Activated CD4-positive, alpha-beta T cell treated with anti-CD3 and anti-CD28 coated beads for 36 hours (primary cell): ENCODE measurements at regions of chr9 and their contacts with region 1.

Region 1: GRCh38 chr9:113410207-113410864 is at the starts of genes C9orf43 and POLE3:
- DNase-seq: peak; percentile 98
- ATAC-seq: peak; percentile 93
- H3K4me3 Mint-ChIP-seq: peak within 1 kb of the TSS; percentile 98
- H3K27ac Mint-ChIP-seq: peak within 1 kb of the TSS; percentile 100
- H3K4me1 Mint-ChIP-seq: peaks cover 36% of the 10 kb centered on the region
- H3K27me3 Mint-ChIP-seq: no peaks in the 10 kb centered on the region
- total RNA-seq, gene C9orf43: 0.91 to 1.1 TPM
- total RNA-seq, gene POLE3: 53.3 to 57.4 TPM

Region 2: GRCh38 chr9:112717661-112718341 is 692.5 kb before region 1 on chr9 and contains the start of gene INIP:
- CTCF ChIA-PET with region 1: no interaction called
- POLR2A ChIA-PET with region 1: no interaction called
- intact Hi-C with region 1: loop called in 1 of 2 experiments (anchors 1 kb)
- DNase-seq: peak; percentile 99
- ATAC-seq: peak; percentile 93
- H3K4me3 Mint-ChIP-seq: peak within 1 kb of the TSS; percentile 89
- H3K27ac Mint-ChIP-seq: peak within 1 kb of the TSS; percentile 97
- H3K4me1 Mint-ChIP-seq: peaks cover 35% of the 10 kb centered on the region
- H3K27me3 Mint-ChIP-seq: no peaks in the 10 kb centered on the region
- total RNA-seq, gene INIP: 37.3 to 37.7 TPM

Region 3: DNA sequence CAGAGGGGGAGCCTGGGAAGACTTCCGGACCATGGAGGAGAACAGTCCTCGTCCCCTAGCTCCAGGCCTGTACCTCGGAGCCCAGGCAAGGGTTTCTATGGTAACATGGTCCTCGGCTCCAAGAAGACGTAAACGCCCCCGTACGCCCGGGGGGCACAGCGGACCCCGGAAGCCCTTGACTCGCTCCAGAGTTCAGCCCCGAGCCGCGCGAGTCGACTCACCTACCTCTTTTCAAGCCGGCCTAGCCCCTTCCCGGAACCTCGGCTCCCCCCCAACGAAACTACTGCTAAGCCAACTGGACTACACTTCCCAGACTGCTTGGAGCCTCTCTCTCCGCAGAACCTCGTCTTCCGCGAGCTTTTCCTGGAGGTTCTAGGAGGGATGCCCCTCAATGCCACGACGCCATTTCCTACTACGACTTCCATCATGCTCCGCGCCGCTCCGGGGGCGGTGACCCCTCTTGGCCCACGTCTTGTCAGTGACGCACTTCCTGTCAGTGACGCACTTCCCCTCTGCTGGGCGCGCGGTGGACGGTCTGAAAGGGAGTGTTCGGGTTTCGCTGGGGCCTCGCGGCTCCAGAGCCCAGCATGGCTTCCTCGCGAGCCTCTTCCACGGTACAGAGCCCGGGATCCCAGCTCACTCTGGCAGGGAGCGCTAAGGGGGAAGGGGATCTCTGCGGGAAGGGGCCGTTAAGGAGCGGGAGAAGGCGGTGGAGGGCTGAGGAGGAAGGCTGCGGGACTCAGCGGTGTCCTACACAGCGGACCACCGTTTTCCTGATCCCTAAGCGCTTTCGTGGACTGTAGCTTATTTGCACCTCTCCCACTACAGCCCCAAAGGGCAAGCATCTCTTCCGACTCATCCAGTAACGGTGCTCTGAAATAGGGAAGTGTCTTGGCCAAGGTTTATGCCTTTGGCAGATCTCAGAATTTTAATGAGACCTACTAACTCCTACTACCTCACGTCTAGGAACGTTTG is 134.9 kb before region 1 on chr9 and contains the starts of genes CDC26 and PRPF4:
- CTCF ChIA-PET with region 1: interaction called, 21 read pairs
- POLR2A ChIA-PET with region 1: interaction called, 13 read pairs
- intact Hi-C with region 1: loop called (anchors 1 kb)
- DNase-seq: peak; percentile 98
- ATAC-seq: peak; percentile 91
- H3K4me3 Mint-ChIP-seq: no peak within 1 kb of the TSS
- H3K27ac Mint-ChIP-seq: no peak within 1 kb of the TSS
- H3K4me1 Mint-ChIP-seq: peaks cover 35% of the 10 kb centered on the region
- H3K27me3 Mint-ChIP-seq: no peaks in the 10 kb centered on the region
- total RNA-seq, gene CDC26: 27.5 to 44.2 TPM
- total RNA-seq, gene PRPF4: 51.5 to 53.1 TPM

Region 4: GRCh38 chr9:113349445-113350094 is 60.8 kb before region 1 on chr9 and contains the start of gene BSPRY:
- CTCF ChIA-PET with region 1: interaction called, 8 read pairs
- POLR2A ChIA-PET with region 1: interaction called, 3 read pairs
- intact Hi-C with region 1: loop called in 1 of 2 experiments (anchors 2 kb)
- DNase-seq: peak; percentile 48
- ATAC-seq: peak; percentile 42
- H3K4me3 Mint-ChIP-seq: peak within 1 kb of the TSS; percentile 75
- H3K27ac Mint-ChIP-seq: peak within 1 kb of the TSS; percentile 71
- H3K4me1 Mint-ChIP-seq: peaks cover 48% of the 10 kb centered on the region
- H3K27me3 Mint-ChIP-seq: peaks cover 37% of the 10 kb centered on the region
- total RNA-seq, gene BSPRY: 5.7 to 6.6 TPM

Region 5: DNA sequence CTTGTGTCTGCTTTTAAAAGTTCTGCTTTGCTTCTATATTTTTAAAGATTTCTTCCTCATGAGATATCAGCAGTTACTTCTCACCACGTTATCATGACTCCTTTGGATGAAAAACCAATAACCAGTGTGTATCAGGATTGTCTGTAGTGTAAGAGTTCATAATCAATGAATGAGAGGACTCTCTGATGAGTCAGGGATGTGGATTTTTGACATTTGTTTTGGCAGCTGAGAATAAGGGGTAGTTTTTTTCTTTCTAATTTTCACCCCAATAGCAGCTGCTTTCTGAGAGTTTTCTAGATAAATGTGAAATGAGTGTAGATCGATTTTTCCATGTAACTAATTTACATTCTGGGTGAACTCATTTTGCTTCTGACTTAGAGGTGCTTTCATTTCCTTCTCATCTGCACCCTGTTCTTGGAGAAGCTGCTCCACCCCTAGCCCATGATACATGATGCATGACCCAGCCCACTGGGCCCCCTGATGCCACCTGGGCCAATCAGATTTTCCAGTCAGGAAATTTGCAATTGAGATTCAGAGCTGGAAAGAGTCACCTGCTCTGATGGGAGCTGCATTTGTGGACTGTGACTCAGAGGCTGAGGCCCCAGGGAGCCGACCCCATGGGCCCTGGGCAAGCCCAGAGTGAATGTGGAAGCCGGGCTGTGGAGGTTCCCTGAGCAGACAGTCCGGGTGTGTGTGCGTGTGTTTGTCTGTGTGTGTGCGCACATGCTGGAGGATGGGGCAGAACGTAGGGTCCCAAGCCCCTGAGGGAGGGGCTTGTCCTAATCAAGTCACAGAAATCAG is 212.5 kb after region 1 on chr9:
- CTCF ChIA-PET with region 1: no interaction called
- POLR2A ChIA-PET with region 1: interaction called, 7 read pairs
- intact Hi-C with region 1: loop called in 1 of 2 experiments (anchors 1 kb)
- DNase-seq: peak; percentile 90
- ATAC-seq: peak; percentile 92
- H3K4me3 Mint-ChIP-seq: peak overlapping the region; percentile 58
- H3K27ac Mint-ChIP-seq: peak overlapping the region; percentile 98
- H3K4me1 Mint-ChIP-seq: peaks cover 57% of the 10 kb centered on the region
- H3K27me3 Mint-ChIP-seq: no peaks in the 10 kb centered on the region

Region 6: DNA sequence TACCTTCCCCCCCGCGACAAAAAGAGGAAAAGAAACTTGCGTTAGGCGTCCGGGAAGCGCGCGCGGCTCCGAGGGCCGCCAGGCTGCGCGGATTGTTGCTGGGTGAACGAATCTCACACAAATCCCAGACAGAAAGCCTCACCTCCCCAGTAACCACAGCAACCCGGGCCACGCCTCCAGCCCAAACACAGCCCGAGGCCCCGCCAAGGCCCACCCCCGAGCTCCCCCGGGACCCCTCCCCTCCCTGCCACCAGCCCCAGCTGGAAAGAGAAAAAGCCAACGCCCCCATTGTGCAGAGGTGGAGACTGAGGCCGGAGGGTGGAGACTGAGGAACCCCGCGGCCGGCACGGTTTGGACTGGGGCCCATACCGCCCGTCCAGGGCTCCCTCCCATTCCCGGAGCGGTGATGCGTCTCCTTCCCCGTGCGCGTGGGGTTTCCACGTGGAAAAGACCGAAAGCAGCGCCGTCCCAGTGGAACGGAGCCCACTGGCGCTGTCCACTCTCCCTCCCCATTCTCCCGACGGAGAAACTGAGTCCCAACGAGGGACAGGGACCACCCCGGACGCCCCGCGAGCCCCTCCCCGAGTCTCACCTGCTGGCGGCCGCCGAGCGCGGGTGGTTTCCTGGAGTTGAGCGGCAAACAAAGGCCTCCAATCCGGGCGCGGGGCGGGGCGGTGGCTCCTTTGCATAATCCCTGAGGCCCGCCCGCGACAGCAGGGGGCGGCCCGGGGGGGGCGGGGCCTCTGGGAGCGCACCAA is 987.7 kb after region 1 on chr9:
- CTCF ChIA-PET with region 1: no interaction called
- POLR2A ChIA-PET with region 1: no interaction called
- intact Hi-C with region 1: loop called in 1 of 2 experiments (anchors 5 kb)
- DNase-seq: peak; percentile 98
- ATAC-seq: peak; percentile 87
- H3K4me3 Mint-ChIP-seq: peak overlapping the region; percentile 93
- H3K27ac Mint-ChIP-seq: peak overlapping the region; percentile 89
- H3K4me1 Mint-ChIP-seq: peaks cover 46% of the 10 kb centered on the region
- H3K27me3 Mint-ChIP-seq: no peaks in the 10 kb centered on the region